Activated CD4-positive, alpha-beta T cell treated with anti-CD3 and anti-CD28 coated beads for 36 hours (primary cell): ENCODE measurements at regions of chr7 and their contacts with region 1.

Region 1: DNA sequence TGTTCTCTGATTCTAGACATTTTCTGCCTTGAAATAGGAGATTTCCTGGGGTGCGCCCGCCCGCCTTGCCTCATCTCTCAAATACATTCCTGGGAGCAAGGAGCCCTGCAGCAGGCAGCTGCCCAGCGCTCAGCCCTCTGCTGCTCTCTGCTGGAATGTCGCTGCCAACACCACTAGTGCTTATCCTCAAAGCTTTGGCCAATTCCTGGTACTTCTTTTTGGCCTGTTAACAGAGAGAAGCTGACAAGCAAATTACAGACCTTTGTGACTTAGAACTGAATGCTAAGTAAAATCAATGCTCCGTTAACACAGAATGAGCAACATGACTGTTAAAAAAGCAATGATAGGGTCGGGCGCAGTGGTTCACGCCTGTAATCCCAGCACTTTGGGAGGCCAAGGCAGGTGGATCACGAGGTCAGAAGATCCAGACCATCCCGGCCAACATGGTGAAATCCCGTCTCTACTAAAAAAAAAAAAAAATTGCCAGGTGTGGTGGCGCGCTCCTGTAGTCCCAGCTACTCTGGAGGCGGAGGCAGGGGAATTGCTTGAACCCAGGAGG is 41.9 kb upstream of the SYPL1 start:
- DNase-seq: peak; percentile 84
- ATAC-seq: peak; percentile 96
- H3K4me3 Mint-ChIP-seq: no peak overlapping the region
- H3K27ac Mint-ChIP-seq: no peak overlapping the region
- H3K4me1 Mint-ChIP-seq: peaks cover 6% of the 10 kb centered on the region
- H3K27me3 Mint-ChIP-seq: peaks cover 18% of the 10 kb centered on the region

Region 2: GRCh38 chr7:105759670-105760550 is 394.1 kb before region 1 on chr7:
- CTCF ChIA-PET with region 1: interaction called, 3 read pairs
- POLR2A ChIA-PET with region 1: no interaction called
- intact Hi-C with region 1: loop called in 1 of 2 experiments (anchors 10 kb)
- DNase-seq: peak; percentile 47
- ATAC-seq: peak; percentile 20
- H3K4me3 Mint-ChIP-seq: no peak overlapping the region
- H3K27ac Mint-ChIP-seq: no peak overlapping the region
- H3K4me1 Mint-ChIP-seq: peaks cover 28% of the 10 kb centered on the region
- H3K27me3 Mint-ChIP-seq: no peaks in the 10 kb centered on the region

Region 3: DNA sequence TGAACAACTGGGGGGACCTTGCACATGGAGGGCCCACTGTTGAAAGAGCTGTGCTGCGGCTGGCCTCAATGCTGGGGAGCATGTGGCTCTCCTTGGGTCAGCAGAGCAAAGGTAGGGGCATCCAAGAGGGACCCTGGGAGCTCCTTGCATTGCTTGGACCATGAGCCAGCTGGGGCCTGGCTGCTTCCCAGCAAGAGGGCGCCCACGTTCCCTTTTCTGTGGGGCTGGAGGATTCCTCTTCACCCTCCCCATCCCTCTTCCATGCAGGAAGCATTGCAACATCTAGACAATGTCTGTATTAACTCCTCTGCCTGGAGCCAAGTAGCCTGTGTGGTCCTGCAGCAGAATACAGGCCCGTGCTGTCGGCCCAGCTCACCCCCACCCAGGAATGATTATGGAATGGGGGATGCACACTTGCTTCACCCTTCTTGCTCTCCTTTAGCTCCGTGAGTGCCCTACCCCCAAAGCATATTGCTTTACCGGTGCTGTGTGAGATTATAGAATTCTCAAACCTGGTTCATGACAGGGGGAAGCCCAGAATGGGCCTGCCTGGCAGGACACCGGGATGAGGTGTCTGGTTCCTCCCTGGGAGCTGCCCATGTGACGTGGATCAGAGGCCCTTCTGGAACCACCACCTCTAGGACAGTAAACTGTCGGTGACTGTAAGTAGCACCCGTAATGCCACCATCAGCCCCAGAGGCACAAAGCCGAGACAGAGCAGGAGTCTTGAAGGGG is 103.8 kb before region 1 on chr7:
- CTCF ChIA-PET with region 1: interaction called, 116 read pairs
- POLR2A ChIA-PET with region 1: no interaction called
- intact Hi-C with region 1: no loop called
- DNase-seq: no peak
- ATAC-seq: no peak
- H3K4me3 Mint-ChIP-seq: no peak overlapping the region
- H3K27ac Mint-ChIP-seq: no peak overlapping the region
- H3K4me1 Mint-ChIP-seq: no peaks in the 10 kb centered on the region
- H3K27me3 Mint-ChIP-seq: no peaks in the 10 kb centered on the region

Region 4: DNA sequence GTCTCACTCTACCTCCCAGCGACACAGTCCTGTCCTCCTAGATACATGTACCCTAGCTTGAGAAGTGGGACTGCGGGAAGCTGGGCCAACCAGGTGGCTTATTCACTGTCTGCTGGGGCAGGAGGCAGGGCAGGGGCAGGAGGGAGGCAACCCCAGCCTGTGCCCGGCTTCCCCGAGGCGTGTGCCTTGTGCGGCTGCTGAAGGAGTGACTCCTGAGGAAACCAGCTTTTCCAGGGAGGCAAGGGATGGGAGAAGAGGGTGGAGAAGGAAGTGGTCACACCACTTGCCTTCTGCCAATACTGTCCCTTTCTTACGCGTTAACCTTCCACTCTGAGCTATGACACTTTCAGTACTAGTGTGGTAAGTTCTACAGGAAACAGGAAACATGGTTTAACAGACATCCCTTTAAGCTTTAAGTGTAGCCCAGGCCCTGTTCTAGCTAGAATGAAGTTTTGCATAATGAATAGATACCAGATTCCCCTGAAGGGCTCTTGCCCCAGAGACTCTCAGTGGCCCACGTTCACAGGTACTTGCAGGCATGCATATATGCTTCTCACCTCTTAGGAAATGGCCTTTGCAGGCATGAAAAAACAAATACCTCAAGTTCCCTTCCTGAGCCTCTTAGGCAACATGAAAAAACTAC is 82.5 kb before region 1 on chr7:
- CTCF ChIA-PET with region 1: interaction called, 20 read pairs
- POLR2A ChIA-PET with region 1: no interaction called
- intact Hi-C with region 1: no loop called
- DNase-seq: peak; percentile 71
- ATAC-seq: peak; percentile 98
- H3K4me3 Mint-ChIP-seq: peak overlapping the region; percentile 60
- H3K27ac Mint-ChIP-seq: peak overlapping the region; percentile 95
- H3K4me1 Mint-ChIP-seq: peaks cover 35% of the 10 kb centered on the region
- H3K27me3 Mint-ChIP-seq: no peaks in the 10 kb centered on the region

Region 5: DNA sequence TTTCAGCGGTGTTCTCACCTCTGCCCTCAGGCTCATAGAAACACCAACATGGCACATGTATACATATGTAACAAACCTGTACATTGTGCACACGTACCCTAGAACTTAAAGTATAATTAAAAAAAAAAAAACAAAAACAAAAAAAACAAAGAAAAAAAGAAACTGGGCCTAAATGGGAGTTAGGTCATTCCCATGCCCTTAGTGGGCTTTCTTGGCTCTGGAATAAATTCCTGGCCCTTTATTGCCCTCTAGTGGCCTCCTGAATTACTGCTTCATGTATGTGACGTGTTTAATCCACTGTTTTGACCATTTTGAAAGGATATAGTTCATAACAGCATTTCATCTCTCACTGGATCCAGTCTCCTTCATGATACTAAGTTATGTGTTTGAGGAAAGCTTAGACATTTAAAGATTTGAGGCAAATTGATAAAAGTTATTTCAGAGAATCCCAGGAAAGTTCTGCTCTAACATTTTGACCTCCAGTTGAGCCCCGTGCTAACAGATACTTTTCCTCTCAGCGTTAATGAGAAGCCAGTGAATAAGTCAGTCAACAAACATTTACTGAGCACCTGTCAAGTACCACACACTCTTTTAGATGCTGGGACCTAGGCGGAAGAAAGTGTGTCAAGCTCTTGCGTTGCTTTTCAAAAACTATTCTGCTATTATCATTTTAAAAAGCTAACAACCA is 12.8 kb after region 1 on chr7:
- CTCF ChIA-PET with region 1: interaction called, 49 read pairs
- POLR2A ChIA-PET with region 1: interaction called, 3 read pairs
- intact Hi-C with region 1: no loop called
- DNase-seq: peak; percentile 53
- ATAC-seq: peak; percentile 30
- H3K4me3 Mint-ChIP-seq: no peak overlapping the region
- H3K27ac Mint-ChIP-seq: no peak overlapping the region
- H3K4me1 Mint-ChIP-seq: no peaks in the 10 kb centered on the region
- H3K27me3 Mint-ChIP-seq: peaks cover 4% of the 10 kb centered on the region